H1 (cell line): ENCODE measurements at regions of chr1 and their contacts with region 1.

Region 1: GRCh38 chr1:110766025-110766647 is 91.4 kb upstream of the KCNA3 start:
- DNase-seq: no peak
- H3K4me3 ChIP-seq: no peak overlapping the region
- H3K27ac ChIP-seq: no peak overlapping the region
- H3K4me1 ChIP-seq: no peaks in the 10 kb centered on the region
- H3K27me3 ChIP-seq: no peaks in the 10 kb centered on the region
- CTCF ChIP-seq: peak in 2 of 3 experiments; percentile 73 to 87; a peak in 3 of 4 replicates
- EP300 ChIP-seq: no peak
- POLR2A ChIP-seq: no peak
- RAD21 ChIP-seq: peak; percentile 84 to 89

Region 2: GRCh38 chr1:110630839-110631663 is 135.1 kb before region 1 on chr1:
- CTCF ChIA-PET with region 1: interaction called, 63 read pairs
- POLR2A ChIA-PET with region 1: no interaction called
- DNase-seq: peak; percentile 54 to 89
- H3K4me3 ChIP-seq: no peak overlapping the region
- H3K27ac ChIP-seq: no peak overlapping the region
- H3K4me1 ChIP-seq: no peaks in the 10 kb centered on the region
- H3K27me3 ChIP-seq: peaks cover 0 to 11% (median 0%) of the 10 kb centered on the region in 4 experiments; a peak in 2 of 7 replicates
- CTCF ChIP-seq: peak; percentile 85 to 93 (median 88)
- EP300 ChIP-seq: no peak
- POLR2A ChIP-seq: no peak
- RAD21 ChIP-seq: peak; percentile 83 to 86

Region 3: DNA sequence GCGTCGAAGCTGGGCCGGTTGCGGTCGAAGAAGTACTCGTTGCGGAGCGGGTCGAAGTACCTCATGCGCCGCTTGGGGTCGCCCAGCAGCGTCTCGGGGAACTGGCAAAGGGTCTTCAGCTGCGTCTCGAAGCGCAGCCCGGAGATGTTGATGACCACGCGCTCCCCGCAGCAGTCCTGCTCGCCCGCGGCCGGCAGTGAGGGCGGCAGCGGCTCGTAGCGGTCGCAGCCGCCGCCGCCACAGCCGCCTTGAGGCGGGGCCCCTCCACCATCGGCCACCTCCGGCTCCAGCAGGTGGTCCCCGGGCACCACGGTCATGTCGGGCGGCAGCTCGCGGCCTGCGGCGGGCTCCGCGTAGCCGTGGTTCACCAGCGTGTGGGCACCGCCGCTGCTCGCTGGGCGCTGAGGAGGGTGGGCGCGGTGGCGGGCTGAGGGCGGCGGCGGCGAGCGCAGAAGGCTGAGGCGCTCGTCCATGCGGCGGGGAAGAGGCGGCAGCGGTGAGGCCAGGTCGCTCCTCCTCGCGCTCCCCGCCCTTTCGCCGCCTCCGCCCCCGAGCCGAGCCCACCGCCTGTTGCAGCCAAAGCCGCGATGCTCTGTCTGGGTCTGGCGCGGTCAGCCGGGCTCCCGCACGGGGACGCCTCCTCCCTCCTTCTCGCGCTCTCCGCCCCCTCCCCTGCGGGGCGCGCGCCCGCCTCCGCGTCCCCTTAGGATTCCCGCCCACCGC is 91.6 kb before region 1 on chr1 and contains the start of gene KCNA3:
- CTCF ChIA-PET with region 1: interaction called, 18 read pairs
- POLR2A ChIA-PET with region 1: no interaction called
- DNase-seq: peak in 1 of 2 experiments; percentile 85
- H3K4me3 ChIP-seq: peak within 1 kb of the TSS; percentile 45 to 71 (median 48)
- H3K27ac ChIP-seq: no peak within 1 kb of the TSS
- H3K4me1 ChIP-seq: peaks cover 0 to 8% (median 2%) of the 10 kb centered on the region in 4 experiments; a peak in 4 of 7 replicates
- H3K27me3 ChIP-seq: peaks cover 27 to 59% (median 49%) of the 10 kb centered on the region in 4 experiments
- CTCF ChIP-seq: peak; percentile 13 to 33 (median 27); a peak in 3 of 4 replicates
- EP300 ChIP-seq: no peak
- POLR2A ChIP-seq: no peak
- RAD21 ChIP-seq: no peak; a peak in 1 of 4 replicates
- total RNA-seq, gene KCNA3: 0.95 and 1.0 TPM in 2 replicates

Region 4: GRCh38 chr1:110746579-110747160 is 19.5 kb before region 1 on chr1:
- CTCF ChIA-PET with region 1: interaction called, 43 read pairs
- POLR2A ChIA-PET with region 1: no interaction called
- DNase-seq: peak; percentile 19 to 75
- H3K4me3 ChIP-seq: no peak overlapping the region
- H3K27ac ChIP-seq: no peak overlapping the region
- H3K4me1 ChIP-seq: peaks cover 0 to 17% (median 8%) of the 10 kb centered on the region in 4 experiments; a peak in 5 of 7 replicates
- H3K27me3 ChIP-seq: peaks cover 0 to 1% (median 0%) of the 10 kb centered on the region in 4 experiments; a peak in 2 of 7 replicates
- CTCF ChIP-seq: no peak
- EP300 ChIP-seq: no peak
- POLR2A ChIP-seq: no peak
- RAD21 ChIP-seq: no peak

Region 5: GRCh38 chr1:110787328-110788071 is 21.4 kb after region 1 on chr1:
- CTCF ChIA-PET with region 1: interaction called, 96 read pairs
- POLR2A ChIA-PET with region 1: no interaction called
- DNase-seq: no peak
- H3K4me3 ChIP-seq: no peak overlapping the region
- H3K27ac ChIP-seq: no peak overlapping the region
- H3K4me1 ChIP-seq: no peaks in the 10 kb centered on the region
- H3K27me3 ChIP-seq: no peaks in the 10 kb centered on the region; a peak in 1 of 7 replicates
- CTCF ChIP-seq: no peak
- EP300 ChIP-seq: no peak
- POLR2A ChIP-seq: no peak
- RAD21 ChIP-seq: no peak

Region 6: DNA sequence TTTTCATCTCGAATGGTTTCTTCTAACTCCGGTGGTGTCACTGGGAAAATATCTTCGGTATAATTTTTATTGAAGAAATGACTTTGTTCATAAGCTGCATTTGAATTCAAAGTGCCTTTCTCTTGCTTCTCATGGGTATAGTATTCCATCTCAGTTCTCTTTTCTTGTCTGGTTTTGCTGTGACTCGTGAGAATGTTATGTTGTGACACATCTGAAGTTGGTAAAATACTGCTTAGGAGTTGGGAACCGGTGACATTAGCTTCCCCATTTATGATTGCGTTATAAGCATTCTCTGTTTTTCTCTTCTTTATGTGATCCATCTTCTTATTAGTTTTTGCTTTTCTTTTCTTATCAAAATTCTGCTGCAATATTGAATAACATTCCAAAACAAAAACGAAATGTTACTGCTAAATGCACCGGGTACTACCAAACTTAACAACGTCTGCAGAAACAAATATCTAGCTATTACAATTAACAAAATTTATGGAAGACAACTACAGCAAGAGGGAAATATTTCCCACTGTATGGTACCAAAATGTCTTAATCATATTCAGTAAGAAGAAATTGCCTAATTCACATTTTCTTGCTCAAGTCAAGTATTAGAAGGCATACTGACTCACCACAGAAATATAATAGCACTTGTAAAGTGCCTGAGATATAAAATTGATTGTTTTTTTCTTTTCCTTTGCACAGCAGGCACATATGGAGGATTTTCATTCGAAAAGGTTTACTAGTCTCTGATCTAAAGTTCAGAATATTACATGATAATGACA is 182.1 kb after region 1 on chr1:
- CTCF ChIA-PET with region 1: no interaction called
- POLR2A ChIA-PET with region 1: no interaction called
- DNase-seq: no peak
- H3K4me3 ChIP-seq: no peak overlapping the region
- H3K27ac ChIP-seq: no peak overlapping the region
- H3K4me1 ChIP-seq: no peaks in the 10 kb centered on the region
- H3K27me3 ChIP-seq: no peaks in the 10 kb centered on the region
- CTCF ChIP-seq: no peak
- EP300 ChIP-seq: no peak
- POLR2A ChIP-seq: no peak
- RAD21 ChIP-seq: no peak